Esophagus squamous epithelium (tissue), 5 donors: ENCODE measurements at regions of chr9 and their contacts with region 1.

Region 1: GRCh38 chr9:88106491-88106890 is 31.8 kb downstream of the SPATA31C2 start:
- DNase-seq: no peak
- H3K4me3 ChIP-seq: no peak overlapping the region
- H3K27ac ChIP-seq: no peak overlapping the region
- H3K4me1 ChIP-seq: no peaks in the 10 kb centered on the region
- H3K27me3 ChIP-seq: peaks cover 0 to 26% (median 0%) of the 10 kb centered on the region in 4 donors
- CTCF ChIP-seq: peak in 5 of 6 experiments; percentile 27 to 55 (median 40)
- POLR2A ChIP-seq: no peak

Region 2: GRCh38 chr9:88258027-88258426 is 151.5 kb after region 1 on chr9:
- intact Hi-C with region 1: no loop called
- DNase-seq: no peak
- H3K4me3 ChIP-seq: no peak overlapping the region
- H3K27ac ChIP-seq: no peak overlapping the region
- H3K4me1 ChIP-seq: peaks cover 0 to 11% (median 3%) of the 10 kb centered on the region in 3 donors
- H3K27me3 ChIP-seq: no peaks in the 10 kb centered on the region
- CTCF ChIP-seq: no peak
- POLR2A ChIP-seq: no peak

Region 3: GRCh38 chr9:88339317-88339716 is 232.8 kb after region 1 on chr9:
- intact Hi-C with region 1: no loop called
- DNase-seq: no peak
- H3K4me3 ChIP-seq: no peak overlapping the region
- H3K27ac ChIP-seq: no peak overlapping the region
- H3K4me1 ChIP-seq: no peaks in the 10 kb centered on the region
- H3K27me3 ChIP-seq: peaks cover 0 to 13% (median 0%) of the 10 kb centered on the region in 4 donors
- CTCF ChIP-seq: no peak
- POLR2A ChIP-seq: no peak

Region 4: GRCh38 chr9:88578121-88579054 is 471.9 kb after region 1 on chr9:
- intact Hi-C with region 1: loop called (anchors 10 kb)
- DNase-seq: no peak
- H3K4me3 ChIP-seq: peak overlapping the region in 2 of 4 donors; percentile 15 to 42
- H3K27ac ChIP-seq: no peak overlapping the region
- H3K4me1 ChIP-seq: peaks cover 0 to 8% (median 0%) of the 10 kb centered on the region in 3 donors
- H3K27me3 ChIP-seq: peaks cover 0 to 39% (median 0%) of the 10 kb centered on the region in 4 donors
- CTCF ChIP-seq: peak; percentile 84 to 99 (median 92)
- POLR2A ChIP-seq: no peak